SK-N-SH (cell line): ENCODE measurements at regions of chr7 and their contacts with region 1.

Region 1: GRCh38 chr7:91880413-91881241 is at the start of gene MTERF1:
- DNase-seq: peak; percentile 93
- H3K4me3 ChIP-seq: peak within 1 kb of the TSS; percentile 72 to 90
- H3K27ac ChIP-seq: peak within 1 kb of the TSS; percentile 61 to 78
- H3K4me1 ChIP-seq: peaks cover 8 to 9% of the 10 kb centered on the region in 2 experiments
- H3K27me3 ChIP-seq: no peaks in the 10 kb centered on the region
- CTCF ChIP-seq: peak; percentile 100
- EP300 ChIP-seq: no peak
- RAD21 ChIP-seq: peak; percentile 91
- polyA plus RNA-seq, gene MTERF1: 6.1 and 12.0 TPM in 2 replicates

Region 2: GRCh38 chr7:91082852-91083495 is 797.7 kb before region 1 on chr7:
- CTCF ChIA-PET with region 1: interaction called, 10 read pairs
- POLR2A ChIA-PET with region 1: no interaction called
- DNase-seq: peak; percentile 38
- H3K4me3 ChIP-seq: no peak overlapping the region
- H3K27ac ChIP-seq: peak overlapping the region; percentile 56 to 95; a peak in 3 of 4 replicates
- H3K4me1 ChIP-seq: peaks cover 23 to 49% of the 10 kb centered on the region in 2 experiments
- H3K27me3 ChIP-seq: no peaks in the 10 kb centered on the region
- CTCF ChIP-seq: peak; percentile 85
- EP300 ChIP-seq: no peak
- RAD21 ChIP-seq: peak; percentile 86

Region 3: GRCh38 chr7:91835846-91836368 is 44.7 kb before region 1 on chr7:
- CTCF ChIA-PET with region 1: interaction called, 31 read pairs
- POLR2A ChIA-PET with region 1: no interaction called
- DNase-seq: no peak
- H3K4me3 ChIP-seq: no peak overlapping the region
- H3K27ac ChIP-seq: no peak overlapping the region
- H3K4me1 ChIP-seq: peaks cover 0 to 5% of the 10 kb centered on the region in 2 experiments; a peak in 3 of 4 replicates
- H3K27me3 ChIP-seq: no peaks in the 10 kb centered on the region
- CTCF ChIP-seq: no peak
- EP300 ChIP-seq: no peak
- RAD21 ChIP-seq: no peak

Region 4: DNA sequence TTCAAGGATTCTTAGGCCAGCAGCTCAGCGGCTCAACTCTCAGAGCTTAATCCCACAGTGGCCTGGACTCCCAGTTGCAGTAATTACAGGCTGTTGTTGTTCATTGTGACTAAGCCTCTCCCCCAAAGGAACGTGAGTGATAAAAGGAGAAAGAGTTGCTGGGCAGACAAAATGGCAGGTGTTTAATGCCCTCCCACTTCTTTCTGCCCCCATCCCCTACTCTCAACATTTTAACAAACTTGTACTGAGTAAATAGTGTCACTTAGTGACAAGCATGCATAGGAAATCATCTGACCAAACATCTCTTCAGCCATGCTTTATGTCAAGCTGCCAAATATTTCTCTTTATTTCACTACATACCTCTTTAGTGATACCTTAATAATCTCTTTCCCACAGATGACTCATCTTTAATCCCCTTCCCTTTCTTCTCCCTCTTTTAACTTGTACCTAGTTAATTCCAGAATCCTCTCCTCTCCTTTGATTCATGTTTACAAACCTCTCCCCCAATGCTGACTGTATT is 12.3 kb after region 1 on chr7:
- CTCF ChIA-PET with region 1: interaction called, 30 read pairs
- POLR2A ChIA-PET with region 1: no interaction called
- DNase-seq: no peak
- H3K4me3 ChIP-seq: no peak overlapping the region
- H3K27ac ChIP-seq: no peak overlapping the region
- H3K4me1 ChIP-seq: no peaks in the 10 kb centered on the region; a peak in 1 of 4 replicates
- H3K27me3 ChIP-seq: no peaks in the 10 kb centered on the region
- CTCF ChIP-seq: no peak
- EP300 ChIP-seq: no peak
- RAD21 ChIP-seq: no peak

Region 5: DNA sequence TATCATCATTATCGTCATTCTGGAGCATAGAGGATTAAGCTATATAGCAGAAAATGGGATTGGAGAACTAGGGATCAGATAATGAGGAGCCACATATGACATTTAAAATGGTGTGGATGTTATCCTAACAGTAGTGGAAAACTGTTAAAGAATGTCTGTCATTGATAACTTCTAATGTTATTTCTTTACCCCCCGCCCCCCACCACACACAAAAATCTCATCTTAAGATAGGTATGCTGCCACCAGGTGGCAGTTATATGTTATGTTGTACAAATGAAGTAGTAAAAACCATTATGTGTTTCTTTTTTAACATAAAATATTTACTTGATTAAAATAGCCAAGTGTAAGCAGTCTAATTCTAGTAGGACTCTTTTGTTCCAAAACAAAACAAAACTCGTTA is 73.0 kb after region 1 on chr7:
- CTCF ChIA-PET with region 1: interaction called, 19 read pairs
- POLR2A ChIA-PET with region 1: no interaction called
- DNase-seq: peak; percentile 20
- H3K4me3 ChIP-seq: no peak overlapping the region
- H3K27ac ChIP-seq: no peak overlapping the region
- H3K4me1 ChIP-seq: no peaks in the 10 kb centered on the region; a peak in 1 of 4 replicates
- H3K27me3 ChIP-seq: no peaks in the 10 kb centered on the region
- CTCF ChIP-seq: peak; percentile 65
- EP300 ChIP-seq: no peak
- RAD21 ChIP-seq: no peak; the same call in 1 of the 2 replicates